HCT116 (cell line): ENCODE measurements at regions of chr16 and their contacts with region 1.

Region 1: DNA sequence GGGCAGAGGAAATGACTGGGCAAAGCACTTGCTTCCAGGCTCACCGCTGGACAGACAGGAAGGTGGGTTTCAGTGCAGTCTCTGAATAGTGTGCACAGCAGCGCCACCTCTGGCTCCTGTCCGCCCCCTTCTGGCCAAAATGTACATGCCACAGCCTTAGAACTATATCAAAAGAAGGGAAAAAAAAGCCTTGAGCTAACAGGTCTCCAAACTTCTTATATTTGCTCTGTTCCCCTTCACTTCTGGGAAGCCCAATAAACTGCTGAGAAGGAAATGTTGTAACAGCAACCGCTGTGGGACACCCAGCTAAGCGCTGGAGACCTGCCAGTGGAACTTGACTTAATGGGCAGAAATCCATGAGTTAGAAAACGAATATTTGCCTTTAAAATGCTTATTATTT is 17.5 kb downstream of the COG7 start:
- DNase-seq: peak; percentile 49
- ATAC-seq: peak; percentile 99
- H3K4me3 ChIP-seq: no peak overlapping the region
- H3K27ac ChIP-seq: no peak overlapping the region
- H3K4me1 ChIP-seq: no peaks in the 10 kb centered on the region
- H3K27me3 ChIP-seq: no peaks in the 10 kb centered on the region
- CTCF ChIP-seq: peak; percentile 95 to 98 (median 96)
- POLR2A ChIP-seq: no peak
- RAD21 ChIP-seq: peak; percentile 58

Region 2: GRCh38 chr16:23081675-23082119 is 353.8 kb before region 1 on chr16:
- CTCF ChIA-PET with region 1: no interaction called
- POLR2A ChIA-PET with region 1: no interaction called
- RAD21 ChIA-PET with region 1: no interaction called
- intact Hi-C with region 1: loop called (anchors 10 kb)
- DNase-seq: no peak
- ATAC-seq: no peak
- H3K4me3 ChIP-seq: no peak overlapping the region
- H3K27ac ChIP-seq: no peak overlapping the region
- H3K4me1 ChIP-seq: no peaks in the 10 kb centered on the region
- H3K27me3 ChIP-seq: no peaks in the 10 kb centered on the region
- CTCF ChIP-seq: no peak
- POLR2A ChIP-seq: no peak
- RAD21 ChIP-seq: no peak

Region 3: DNA sequence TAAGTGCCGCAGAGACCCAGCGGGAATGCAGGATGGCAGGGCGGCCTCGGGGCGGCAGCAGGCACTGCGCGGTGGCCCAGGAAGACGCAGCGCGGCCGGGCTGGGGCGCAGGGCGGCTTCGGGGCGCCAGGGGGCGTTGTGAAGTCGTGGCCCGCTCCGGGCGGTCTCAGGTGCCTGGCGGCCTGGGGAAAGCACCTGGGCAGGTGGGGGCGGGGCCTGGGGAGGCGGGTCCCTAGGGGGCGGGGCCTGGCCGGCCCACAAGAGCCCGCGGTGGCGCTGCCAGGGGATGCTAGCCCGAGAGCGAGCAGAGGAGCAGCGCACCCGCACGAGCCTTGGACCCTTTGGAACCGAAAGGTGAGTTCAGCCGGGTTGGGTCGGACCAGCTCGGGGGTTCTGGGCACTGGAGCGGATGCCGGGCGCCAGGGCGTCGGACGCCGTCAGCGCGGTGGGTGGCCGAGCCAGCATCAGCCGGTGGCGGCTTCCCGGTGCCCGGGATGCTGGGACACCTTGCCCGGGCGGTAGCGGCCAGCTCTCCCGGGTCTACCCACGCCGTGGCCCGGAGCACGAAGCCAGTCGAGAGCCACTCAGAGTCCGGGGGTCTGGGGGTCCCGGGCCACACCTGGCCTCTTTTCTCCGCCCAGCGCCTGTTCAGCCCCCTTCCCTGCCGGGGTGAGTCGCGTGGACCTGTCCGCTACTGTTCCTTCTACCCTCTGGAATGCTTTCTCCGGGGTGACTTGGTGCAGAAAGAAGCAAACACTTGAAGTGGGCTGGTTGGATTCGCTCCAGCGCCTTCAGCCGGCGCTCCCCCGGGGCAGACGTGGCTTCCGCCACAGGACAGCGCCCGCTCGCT is 252.8 kb before region 1 on chr16 and contains the start of gene SCNN1G:
- CTCF ChIA-PET with region 1: interaction called, 76 read pairs
- POLR2A ChIA-PET with region 1: no interaction called
- RAD21 ChIA-PET with region 1: no interaction called
- intact Hi-C with region 1: loop called (anchors 1 kb)
- DNase-seq: peak; percentile 57
- ATAC-seq: peak; percentile 99
- H3K4me3 ChIP-seq: no peak within 1 kb of the TSS
- H3K27ac ChIP-seq: no peak within 1 kb of the TSS
- H3K4me1 ChIP-seq: peaks cover 0 to 4% of the 10 kb centered on the region in 2 experiments; a peak in 2 of 4 replicates
- H3K27me3 ChIP-seq: peaks cover 27% of the 10 kb centered on the region; the same call in 1 of the 2 replicates
- CTCF ChIP-seq: peak; percentile 87 to 98 (median 92)
- POLR2A ChIP-seq: no peak
- RAD21 ChIP-seq: peak; percentile 89
- total RNA-seq, gene SCNN1G: not detected

Region 4: GRCh38 chr16:23274969-23275368 is 160.5 kb before region 1 on chr16:
- CTCF ChIA-PET with region 1: no interaction called
- POLR2A ChIA-PET with region 1: no interaction called
- RAD21 ChIA-PET with region 1: no interaction called
- intact Hi-C with region 1: no loop called
- DNase-seq: peak; percentile 56
- ATAC-seq: peak; percentile 97
- H3K4me3 ChIP-seq: no peak overlapping the region
- H3K27ac ChIP-seq: no peak overlapping the region
- H3K4me1 ChIP-seq: no peaks in the 10 kb centered on the region
- H3K27me3 ChIP-seq: 0 out of 2 replicates have a peak, but pooled peaks cover 5% of the 10 kb centered on the region
- CTCF ChIP-seq: no peak
- POLR2A ChIP-seq: no peak
- RAD21 ChIP-seq: no peak

Region 5: DNA sequence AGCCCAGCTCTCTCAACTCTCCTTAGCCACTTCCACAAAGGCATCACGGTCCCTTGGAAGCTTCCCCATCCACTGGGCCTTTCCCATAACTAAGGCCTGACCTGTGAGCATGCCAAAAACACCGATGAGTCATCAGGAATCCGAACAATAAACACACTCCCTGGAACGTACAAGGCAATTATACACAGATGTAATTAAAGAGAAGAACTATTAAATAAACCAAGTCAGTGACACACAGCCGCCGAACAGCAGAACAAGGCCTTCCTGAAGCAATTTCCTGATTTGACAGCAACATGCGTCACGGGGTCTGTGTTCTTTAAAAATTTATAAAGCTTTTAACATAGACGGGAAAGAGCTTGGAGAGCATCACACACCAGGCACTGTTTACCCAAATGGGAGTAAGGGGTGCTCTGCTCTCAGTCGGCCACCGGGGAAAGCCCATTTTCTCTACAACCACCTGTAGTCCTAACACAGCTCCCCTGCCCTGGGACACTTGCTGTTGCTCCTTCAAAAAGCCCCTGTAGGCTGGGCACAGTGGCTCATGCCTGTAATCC is 11.9 kb before region 1 on chr16:
- CTCF ChIA-PET with region 1: interaction called, 20 read pairs
- POLR2A ChIA-PET with region 1: no interaction called
- RAD21 ChIA-PET with region 1: no interaction called
- intact Hi-C with region 1: no loop called
- DNase-seq: peak; percentile 76
- ATAC-seq: peak; percentile 93
- H3K4me3 ChIP-seq: no peak overlapping the region
- H3K27ac ChIP-seq: peak overlapping the region; percentile 62
- H3K4me1 ChIP-seq: peaks cover 20 to 26% of the 10 kb centered on the region in 2 experiments
- H3K27me3 ChIP-seq: no peaks in the 10 kb centered on the region
- CTCF ChIP-seq: no peak
- POLR2A ChIP-seq: no peak
- RAD21 ChIP-seq: no peak

Region 6: DNA sequence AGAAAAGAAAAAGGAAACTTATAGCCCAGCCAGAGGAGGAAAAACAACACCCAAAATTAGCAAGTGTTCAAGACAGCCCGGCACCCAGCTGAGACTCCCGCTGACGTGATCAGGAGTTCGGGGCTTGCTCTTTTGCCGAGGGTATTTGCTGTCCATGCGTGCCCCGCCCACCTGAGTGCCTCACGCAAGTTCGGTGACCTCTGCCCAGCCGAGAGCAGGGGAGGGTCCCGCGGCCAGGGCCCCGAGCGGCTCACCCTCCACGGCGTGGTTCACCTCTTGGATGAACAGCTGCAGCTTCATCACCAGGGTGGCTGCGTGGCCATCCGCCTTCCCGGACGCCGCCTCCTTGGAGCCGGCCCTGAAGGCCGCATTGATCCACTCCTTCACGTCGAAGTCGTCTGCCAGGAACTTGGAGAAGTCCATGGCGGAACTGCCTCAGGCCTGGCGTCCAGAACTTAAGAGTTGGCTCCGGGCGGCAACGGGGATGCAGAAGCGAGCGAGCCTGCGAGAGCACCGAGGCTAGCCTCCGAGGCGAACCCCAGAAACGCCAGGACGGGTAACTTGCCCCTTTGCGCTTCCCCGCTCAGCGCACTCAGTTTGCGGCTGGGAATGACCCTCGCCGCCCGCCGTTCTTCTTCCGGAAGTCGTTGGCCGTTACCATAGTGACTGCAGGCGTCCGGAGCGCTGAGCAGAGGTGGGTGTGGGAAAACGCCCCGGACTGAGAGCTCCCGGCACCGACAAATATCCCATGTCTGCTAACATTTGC is 17.3 kb after region 1 on chr16 and contains the start of gene COG7:
- CTCF ChIA-PET with region 1: interaction called, 16 read pairs
- POLR2A ChIA-PET with region 1: no interaction called
- RAD21 ChIA-PET with region 1: no interaction called
- intact Hi-C with region 1: no loop called
- DNase-seq: peak; percentile 78
- ATAC-seq: peak; percentile 87
- H3K4me3 ChIP-seq: peak within 1 kb of the TSS; percentile 74 to 84
- H3K27ac ChIP-seq: peak within 1 kb of the TSS; percentile 84
- H3K4me1 ChIP-seq: peaks cover 6 to 15% of the 10 kb centered on the region in 2 experiments
- H3K27me3 ChIP-seq: no peaks in the 10 kb centered on the region
- CTCF ChIP-seq: no peak
- POLR2A ChIP-seq: no peak
- RAD21 ChIP-seq: no peak
- total RNA-seq, gene COG7: 22.1 TPM

Region 7: DNA sequence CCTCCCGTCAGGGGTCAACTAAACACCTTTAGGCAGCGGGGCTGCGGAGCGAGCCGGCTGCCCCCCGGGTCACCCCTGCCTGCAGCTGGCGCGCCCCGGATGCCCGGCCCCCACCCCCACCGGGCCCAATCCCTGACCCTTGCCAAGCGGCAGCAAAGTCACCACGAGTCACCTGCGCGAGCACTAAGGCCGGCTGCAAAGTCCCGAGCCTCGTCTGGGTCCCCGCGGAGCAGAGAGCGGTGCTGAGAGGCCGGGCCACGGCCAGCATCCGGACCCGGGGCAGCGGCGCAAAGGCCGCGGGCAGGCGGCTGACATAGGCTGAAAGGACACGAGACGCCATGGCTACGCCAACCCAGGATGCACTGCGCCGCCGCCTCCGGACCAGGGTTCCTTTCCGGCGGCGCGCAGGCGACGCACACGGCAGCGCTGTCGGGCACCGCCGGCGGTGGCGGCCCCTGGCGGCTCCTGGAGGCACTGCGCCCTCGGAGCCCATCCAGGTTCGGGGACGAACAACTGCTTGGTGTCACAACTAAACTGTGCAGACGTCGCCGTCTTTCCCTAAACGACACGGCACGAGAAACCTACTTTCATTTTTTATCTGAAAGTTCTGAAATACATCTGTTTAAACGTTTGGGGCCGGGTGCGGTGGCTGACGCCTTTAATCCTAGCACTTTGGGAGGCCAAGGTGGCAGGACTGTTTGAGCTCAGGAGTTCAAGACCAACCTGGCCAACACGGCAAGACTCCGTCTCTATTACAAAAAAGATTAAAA is 160.6 kb after region 1 on chr16 and contains the start of gene NDUFAB1:
- CTCF ChIA-PET with region 1: interaction called, 10 read pairs
- POLR2A ChIA-PET with region 1: no interaction called
- RAD21 ChIA-PET with region 1: no interaction called
- intact Hi-C with region 1: no loop called
- DNase-seq: peak; percentile 67
- ATAC-seq: peak; percentile 88
- H3K4me3 ChIP-seq: peak within 1 kb of the TSS; percentile 85 to 100
- H3K27ac ChIP-seq: peak within 1 kb of the TSS; percentile 77
- H3K4me1 ChIP-seq: peaks cover 16 to 25% of the 10 kb centered on the region in 2 experiments; a peak in 3 of 4 replicates
- H3K27me3 ChIP-seq: no peaks in the 10 kb centered on the region
- CTCF ChIP-seq: peak; percentile 68 to 99 (median 82)
- POLR2A ChIP-seq: peak; percentile 55
- RAD21 ChIP-seq: 0 out of 2 replicates have a peak, but pooled peaks have one; percentile 31
- total RNA-seq, gene NDUFAB1: 169 TPM

Region 8: GRCh38 chr16:24036614-24037013 is 601.1 kb after region 1 on chr16:
- CTCF ChIA-PET with region 1: no interaction called
- POLR2A ChIA-PET with region 1: no interaction called
- RAD21 ChIA-PET with region 1: no interaction called
- intact Hi-C with region 1: loop called (anchors 1 kb)
- DNase-seq: peak; percentile 29
- ATAC-seq: peak; percentile 86
- H3K4me3 ChIP-seq: no peak overlapping the region
- H3K27ac ChIP-seq: no peak overlapping the region
- H3K4me1 ChIP-seq: no peaks in the 10 kb centered on the region
- H3K27me3 ChIP-seq: no peaks in the 10 kb centered on the region
- CTCF ChIP-seq: peak; percentile 61 to 79 (median 65)
- POLR2A ChIP-seq: no peak
- RAD21 ChIP-seq: peak; percentile 88